H1 (cell line): ENCODE measurements at regions of chr3 and their contacts with region 1.

Region 1: GRCh38 chr3:124032648-124033359 is 40.9 kb upstream of the ROPN1 start:
- DNase-seq: peak; percentile 44 to 95
- H3K4me3 ChIP-seq: peak overlapping the region; percentile 68 to 98 (median 86)
- H3K27ac ChIP-seq: peak overlapping the region; percentile 30; the same call in 1 of the 2 replicates
- H3K4me1 ChIP-seq: peaks cover 0 to 7% (median 2%) of the 10 kb centered on the region in 4 experiments; a peak in 3 of 7 replicates
- H3K27me3 ChIP-seq: peaks cover 12 to 39% (median 36%) of the 10 kb centered on the region in 4 experiments
- CTCF ChIP-seq: peak; percentile 39 to 63 (median 48)
- EP300 ChIP-seq: peak in 1 of 2 experiments; percentile 86; a peak in 1 of 3 replicates
- POLR2A ChIP-seq: peak; percentile 39 to 65; a peak in 2 of 3 replicates
- RAD21 ChIP-seq: peak in 1 of 2 experiments; percentile 27; a peak in 2 of 4 replicates

Region 2: GRCh38 chr3:123930445-123930844 is 102.4 kb before region 1 on chr3:
- CTCF ChIA-PET with region 1: no interaction called
- POLR2A ChIA-PET with region 1: no interaction called
- DNase-seq: no peak
- H3K4me3 ChIP-seq: no peak overlapping the region
- H3K27ac ChIP-seq: no peak overlapping the region
- H3K4me1 ChIP-seq: no peaks in the 10 kb centered on the region
- H3K27me3 ChIP-seq: no peaks in the 10 kb centered on the region
- CTCF ChIP-seq: no peak
- EP300 ChIP-seq: no peak
- POLR2A ChIP-seq: no peak
- RAD21 ChIP-seq: no peak

Region 3: GRCh38 chr3:123941121-123941520 is 91.7 kb before region 1 on chr3:
- CTCF ChIA-PET with region 1: no interaction called
- POLR2A ChIA-PET with region 1: no interaction called
- DNase-seq: no peak
- H3K4me3 ChIP-seq: no peak overlapping the region
- H3K27ac ChIP-seq: no peak overlapping the region
- H3K4me1 ChIP-seq: no peaks in the 10 kb centered on the region
- H3K27me3 ChIP-seq: no peaks in the 10 kb centered on the region
- CTCF ChIP-seq: no peak
- EP300 ChIP-seq: no peak
- POLR2A ChIP-seq: no peak
- RAD21 ChIP-seq: no peak

Region 4: DNA sequence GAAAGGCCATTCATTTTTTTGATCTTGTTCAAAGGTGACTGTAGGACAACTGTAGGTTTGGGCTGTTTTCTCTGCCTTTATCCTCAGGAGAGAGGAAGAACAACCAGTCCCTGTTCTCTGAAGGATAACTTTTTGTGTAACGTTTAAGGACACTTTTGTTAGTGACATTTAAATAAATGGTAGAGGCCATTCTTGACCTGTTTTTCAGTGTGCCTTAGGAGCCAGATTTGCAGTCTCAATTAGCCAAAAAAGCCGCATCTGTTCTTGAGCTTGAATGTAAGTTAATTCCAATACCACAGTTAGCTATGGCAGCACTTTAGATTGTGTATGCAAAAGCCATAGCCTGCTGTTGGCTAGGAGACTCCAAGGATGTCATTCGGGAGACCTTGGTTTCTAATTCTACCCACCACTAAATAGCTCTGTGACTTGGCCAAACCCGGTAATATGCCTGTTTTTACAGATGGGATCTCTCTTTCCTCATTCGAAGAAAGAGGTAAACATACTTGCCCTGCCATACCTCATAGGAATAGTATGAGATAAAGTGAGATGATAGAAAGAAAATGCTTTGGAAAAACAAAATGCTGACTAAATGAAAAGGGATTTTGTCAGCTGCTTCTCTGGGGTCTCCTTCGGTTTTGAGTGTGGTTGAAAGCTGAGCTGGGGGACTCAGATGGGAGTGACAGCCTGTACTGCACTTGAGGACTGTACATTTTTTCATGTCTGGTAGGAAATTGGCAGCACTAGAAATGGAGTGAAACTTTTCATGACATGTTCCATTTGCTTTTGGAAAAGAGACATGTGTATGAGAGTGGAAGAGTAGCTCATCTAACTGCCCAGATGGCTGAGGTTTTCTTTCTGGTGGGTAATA is 16.4 kb after region 1 on chr3:
- CTCF ChIA-PET with region 1: interaction called, 13 read pairs
- POLR2A ChIA-PET with region 1: interaction called, 8 read pairs
- DNase-seq: no peak
- H3K4me3 ChIP-seq: no peak overlapping the region
- H3K27ac ChIP-seq: no peak overlapping the region
- H3K4me1 ChIP-seq: no peaks in the 10 kb centered on the region
- H3K27me3 ChIP-seq: peaks cover 0 to 1% (median 0%) of the 10 kb centered on the region in 4 experiments; a peak in 1 of 7 replicates
- CTCF ChIP-seq: no peak
- EP300 ChIP-seq: no peak
- POLR2A ChIP-seq: no peak
- RAD21 ChIP-seq: no peak